PC-9 (cell line): ENCODE measurements at regions of chr3 and their contacts with region 1.

Region 1: GRCh38 chr3:104005816-104006215 is 1360.9 kb upstream of the ALCAM start:
- DNase-seq: no peak
- H3K4me3 ChIP-seq: no peak overlapping the region
- H3K27ac ChIP-seq: no peak overlapping the region
- H3K4me1 ChIP-seq: no peaks in the 10 kb centered on the region
- H3K27me3 ChIP-seq: no peaks in the 10 kb centered on the region
- CTCF ChIP-seq: no peak

Region 2: DNA sequence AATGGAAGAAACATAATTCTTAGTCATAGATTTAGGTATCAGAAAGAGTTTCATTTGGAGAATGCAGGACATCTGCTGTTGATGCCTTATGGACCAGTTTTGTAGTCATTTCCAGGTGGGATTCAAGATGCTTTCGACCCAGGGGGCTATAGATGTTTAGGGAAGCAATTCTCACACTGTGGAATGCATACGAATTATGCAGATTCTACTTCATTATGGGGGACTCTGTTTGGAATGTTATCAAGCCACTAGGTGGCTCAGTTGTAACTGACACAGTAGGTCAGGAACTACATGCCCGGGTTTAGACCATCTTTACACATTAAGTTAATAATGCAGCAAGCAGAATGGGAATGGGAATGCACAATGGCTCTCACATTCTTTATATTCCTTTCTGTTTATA is 211.2 kb before region 1 on chr3:
- CTCF ChIA-PET with region 1: no interaction called
- POLR2A ChIA-PET with region 1: no interaction called
- intact Hi-C with region 1: no loop called
- DNase-seq: no peak
- H3K4me3 ChIP-seq: no peak overlapping the region
- H3K27ac ChIP-seq: no peak overlapping the region
- H3K4me1 ChIP-seq: no peaks in the 10 kb centered on the region
- H3K27me3 ChIP-seq: no peaks in the 10 kb centered on the region
- CTCF ChIP-seq: no peak; the same call in 1 of the 2 replicates

Region 3: GRCh38 chr3:105806361-105806760 is 1800.5 kb after region 1 on chr3:
- CTCF ChIA-PET with region 1: no interaction called
- POLR2A ChIA-PET with region 1: interaction called, 12 read pairs
- intact Hi-C with region 1: no loop called
- DNase-seq: peak; percentile 23 to 57
- H3K4me3 ChIP-seq: no peak overlapping the region
- H3K27ac ChIP-seq: no peak overlapping the region
- H3K4me1 ChIP-seq: peaks cover 10% of the 10 kb centered on the region; the same call in 1 of the 2 replicates
- H3K27me3 ChIP-seq: no peaks in the 10 kb centered on the region
- CTCF ChIP-seq: no peak